ENCODE measurements at regions of chr9 and their contacts with region 1.

Region 1: GRCh38 chr9:82101475-82101874 is 112.9 kb downstream of the SPATA31D1 start:
- DNase-seq: no peak
- H3K4me3 ChIP-seq: no peak overlapping the region
- H3K27ac ChIP-seq: no peak overlapping the region
- H3K4me1 ChIP-seq: no peaks in the 10 kb centered on the region
- H3K27me3 ChIP-seq: no peaks in the 10 kb centered on the region
- CTCF ChIP-seq: peak; percentile 37; the same call in 1 of the 2 replicates

Region 2: DNA sequence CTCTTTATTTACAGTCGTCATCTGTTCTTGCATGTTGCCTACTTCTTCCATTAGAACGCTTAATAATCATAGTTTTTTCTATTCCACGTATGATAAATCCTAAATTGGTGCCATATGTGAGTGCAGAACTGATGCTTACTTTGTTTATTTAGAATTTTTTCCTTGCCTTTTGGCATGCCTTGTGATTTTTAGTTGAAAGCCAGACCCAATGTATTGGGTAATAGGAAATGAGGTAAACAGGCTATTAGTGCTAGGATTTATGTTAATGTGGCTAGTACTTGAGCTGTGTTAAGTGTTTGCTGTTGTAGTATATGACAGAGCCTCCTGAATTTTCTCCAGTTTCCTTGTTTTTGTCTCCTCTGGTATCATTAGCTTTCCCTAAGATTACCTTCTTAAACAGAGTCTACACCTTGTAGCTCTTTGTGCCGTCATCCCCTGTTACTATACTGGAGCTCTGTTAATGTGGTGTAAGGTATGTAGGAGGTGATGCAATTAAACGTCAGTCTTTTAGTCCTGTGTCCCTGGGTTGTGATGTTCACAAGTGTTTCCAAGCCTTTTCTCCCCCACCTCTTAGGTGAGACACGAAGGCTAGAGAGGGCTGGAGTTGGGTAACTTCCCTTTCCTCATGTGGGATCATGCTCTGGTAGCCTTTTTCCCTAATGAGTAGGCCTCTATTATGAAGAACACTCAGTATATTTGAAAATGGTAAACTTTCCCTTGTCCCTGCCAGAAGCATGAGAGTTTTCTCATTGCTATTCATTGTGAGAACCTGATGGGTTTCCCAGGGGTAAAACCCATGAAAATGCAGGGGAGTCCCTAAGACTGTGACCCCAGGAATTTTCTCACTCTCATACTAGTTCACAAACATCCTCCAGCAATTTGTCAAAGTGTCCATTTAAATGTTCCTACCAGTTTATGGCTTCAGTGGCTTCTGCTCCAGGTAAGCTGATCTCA is 137.0 kb before region 1 on chr9:
- CTCF ChIA-PET with region 1: no interaction called
- POLR2A ChIA-PET with region 1: no interaction called
- intact Hi-C with region 1: no loop called
- DNase-seq: no peak
- H3K4me3 ChIP-seq: no peak overlapping the region
- H3K27ac ChIP-seq: no peak overlapping the region
- H3K4me1 ChIP-seq: no peaks in the 10 kb centered on the region
- H3K27me3 ChIP-seq: no peaks in the 10 kb centered on the region
- CTCF ChIP-seq: no peak

Region 3: DNA sequence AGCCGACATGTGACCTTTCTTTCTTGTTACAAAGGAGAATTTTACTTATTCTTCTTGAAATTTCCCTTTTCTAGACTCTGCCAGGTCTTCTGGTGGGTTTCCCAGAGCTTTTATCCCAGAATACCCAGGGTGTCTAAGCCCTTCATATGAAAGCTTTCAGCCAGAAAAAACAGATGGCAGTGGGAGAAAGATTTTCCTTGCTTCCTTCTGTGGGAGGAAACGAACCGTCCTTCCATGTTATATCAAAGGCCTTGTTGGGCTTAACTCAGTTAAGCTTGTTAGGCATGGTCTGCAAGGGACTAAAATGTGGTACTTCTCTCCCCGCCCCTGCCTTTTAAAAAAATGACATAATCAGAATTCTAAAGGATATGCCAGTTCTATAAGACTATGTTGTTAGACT is 65.4 kb before region 1 on chr9:
- CTCF ChIA-PET with region 1: no interaction called
- POLR2A ChIA-PET with region 1: no interaction called
- intact Hi-C with region 1: loop called (anchors 10 kb)
- DNase-seq: no peak
- H3K4me3 ChIP-seq: no peak overlapping the region
- H3K27ac ChIP-seq: no peak overlapping the region
- H3K4me1 ChIP-seq: no peaks in the 10 kb centered on the region
- H3K27me3 ChIP-seq: no peaks in the 10 kb centered on the region
- CTCF ChIP-seq: no peak

Region 4: GRCh38 chr9:82254646-82255367 is 153.3 kb after region 1 on chr9:
- CTCF ChIA-PET with region 1: no interaction called
- POLR2A ChIA-PET with region 1: no interaction called
- intact Hi-C with region 1: no loop called
- DNase-seq: no peak
- H3K4me3 ChIP-seq: no peak overlapping the region
- H3K27ac ChIP-seq: no peak overlapping the region
- H3K4me1 ChIP-seq: no peaks in the 10 kb centered on the region
- H3K27me3 ChIP-seq: no peaks in the 10 kb centered on the region
- CTCF ChIP-seq: no peak

Measured in PC-9 (cell line).